ENCODE measurements at regions of chr16 and their contacts with region 1.

Region 1: DNA sequence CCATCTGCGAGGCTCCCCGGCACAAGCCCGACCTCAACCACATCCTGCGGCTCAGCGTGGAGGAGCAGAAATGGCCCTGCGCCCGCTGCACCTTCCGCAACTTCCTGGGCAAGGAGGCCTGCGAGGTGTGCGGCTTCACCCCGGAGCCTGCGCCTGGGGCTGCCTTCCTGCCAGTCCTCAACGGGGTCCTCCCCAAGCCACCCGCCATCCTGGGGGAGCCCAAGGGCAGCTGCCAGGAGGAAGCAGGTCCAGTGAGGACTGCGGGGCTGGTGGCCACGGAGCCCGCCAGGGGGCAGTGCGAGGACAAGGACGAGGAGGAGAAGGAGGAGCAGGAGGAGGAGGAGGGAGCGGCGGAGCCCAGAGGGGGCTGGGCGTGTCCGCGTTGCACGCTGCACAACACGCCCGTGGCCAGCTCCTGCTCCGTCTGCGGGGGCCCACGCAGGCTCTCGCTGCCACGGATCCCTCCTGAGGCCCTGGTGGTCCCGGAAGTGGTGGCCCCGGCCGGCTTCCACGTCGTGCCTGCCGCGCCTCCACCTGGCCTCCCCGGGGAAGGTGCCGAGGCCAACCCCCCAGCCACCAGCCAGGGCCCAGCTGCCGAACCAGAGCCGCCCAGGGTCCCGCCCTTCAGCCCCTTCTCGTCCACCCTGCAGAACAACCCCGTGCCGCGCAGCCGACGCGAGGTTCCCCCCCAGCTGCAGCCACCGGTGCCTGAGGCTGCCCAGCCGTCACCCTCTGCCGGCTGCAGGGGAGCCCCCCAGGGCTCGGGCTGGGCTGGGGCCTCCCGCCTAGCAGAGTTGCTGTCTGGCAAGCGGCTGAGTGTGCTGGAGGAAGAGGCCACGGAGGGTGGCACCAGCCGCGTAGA is 13.1 kb upstream of the PRR35 start:
- DNase-seq: peak; percentile 75 to 78
- H3K4me3 ChIP-seq: peak overlapping the region in 2 of 3 donors; percentile 28 to 62
- H3K27ac ChIP-seq: no peak overlapping the region
- H3K4me1 ChIP-seq: no peaks in the 10 kb centered on the region
- H3K27me3 ChIP-seq: no peaks in the 10 kb centered on the region
- CTCF ChIP-seq: peak; percentile 48 to 76 (median 53)
- POLR2A ChIP-seq: no peak

Region 2: DNA sequence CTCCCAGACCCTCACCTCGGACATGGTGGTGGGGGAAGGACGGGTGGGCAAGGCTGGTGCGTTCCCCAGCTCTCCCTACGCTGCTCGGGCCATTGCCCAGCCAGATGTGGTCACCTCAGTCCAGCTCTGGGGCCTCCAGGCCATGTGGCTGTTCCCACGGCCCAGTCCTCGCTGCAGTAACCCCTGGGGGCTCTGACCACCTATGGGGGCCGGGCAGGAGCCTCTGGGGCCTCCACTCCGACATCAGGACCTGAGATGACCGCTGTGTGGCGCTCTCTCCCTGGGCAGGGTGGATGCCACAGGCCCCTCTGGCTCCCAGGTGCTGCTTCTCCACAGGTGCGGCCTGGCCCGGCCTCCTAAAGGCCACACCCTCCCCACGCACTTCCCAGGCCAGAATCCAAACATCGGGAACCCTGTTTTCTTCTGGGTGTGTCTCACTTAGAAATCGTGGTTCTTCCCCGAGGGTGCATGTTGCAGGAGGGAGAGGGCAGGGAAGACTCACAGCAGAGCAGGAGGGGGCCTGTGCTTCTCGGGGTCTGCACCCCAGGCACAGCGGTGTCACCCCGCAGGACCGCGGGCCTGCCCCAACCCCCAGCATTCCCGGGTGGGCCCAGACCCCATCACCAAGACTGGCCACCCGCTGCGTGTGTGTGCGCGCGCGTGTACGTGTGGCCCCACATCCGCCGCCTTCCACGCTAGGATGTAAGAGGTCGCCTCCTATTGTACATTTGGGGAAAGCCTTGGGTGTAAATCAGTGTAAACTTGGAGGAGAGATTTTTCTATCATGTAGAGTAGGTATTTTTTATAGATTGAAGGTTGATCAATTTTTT is 25.5 kb before region 1 on chr16:
- intact Hi-C with region 1: no loop called
- DNase-seq: no peak
- H3K4me3 ChIP-seq: no peak overlapping the region
- H3K27ac ChIP-seq: no peak overlapping the region
- H3K4me1 ChIP-seq: peaks cover 0 to 20% of the 10 kb centered on the region in 2 donors
- H3K27me3 ChIP-seq: no peaks in the 10 kb centered on the region
- CTCF ChIP-seq: no peak
- POLR2A ChIP-seq: no peak

Region 3: GRCh38 chr16:565419-566330 is 18.5 kb after region 1 on chr16:
- intact Hi-C with region 1: loop called (anchors 1 kb)
- DNase-seq: peak in 1 of 2 donors; percentile 74
- H3K4me3 ChIP-seq: peak overlapping the region in 2 of 3 donors; percentile 27 to 62
- H3K27ac ChIP-seq: peak overlapping the region; percentile 61 to 86
- H3K4me1 ChIP-seq: peaks cover 24 to 30% of the 10 kb centered on the region in 2 donors
- H3K27me3 ChIP-seq: peaks cover 2 to 21% of the 10 kb centered on the region in 2 donors
- CTCF ChIP-seq: no peak
- POLR2A ChIP-seq: no peak

Measured in breast epithelium (tissue), 4 donors.